Right ventricle myocardium inferior (tissue), 1 donor: ENCODE measurements at regions of chr7 and their contacts with region 1.

Region 1: DNA sequence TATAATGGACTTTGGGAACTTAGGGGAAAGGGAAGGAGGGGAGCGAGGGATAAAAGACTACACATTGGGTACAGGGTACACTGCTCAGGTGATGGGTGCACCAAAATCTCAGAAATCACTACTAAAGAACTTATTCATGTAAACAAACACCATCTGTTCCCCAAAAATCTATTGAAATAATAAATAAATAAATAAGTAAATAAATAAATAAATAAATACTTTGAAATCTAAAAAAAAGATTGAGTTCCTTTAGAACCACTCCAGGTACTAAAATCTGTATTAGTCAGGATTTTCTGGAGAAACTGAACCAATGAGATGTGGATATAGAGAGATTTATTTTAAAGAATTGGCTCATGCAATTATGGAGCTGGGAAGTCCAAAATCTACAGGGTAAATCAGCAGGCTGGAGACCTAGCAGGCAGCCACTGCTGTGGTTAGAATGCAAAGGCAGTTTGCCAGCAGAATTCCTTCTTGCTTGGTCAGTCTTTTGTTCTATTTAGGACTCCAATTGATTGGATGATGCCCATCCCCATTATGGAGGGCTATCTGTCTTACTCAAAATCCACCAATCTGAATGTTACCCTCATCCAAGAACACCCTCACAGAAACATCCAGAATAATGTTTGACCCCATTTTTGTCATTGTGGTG is 8.9 kb downstream of the IGFBP1 start:
- DNase-seq: no peak
- ATAC-seq: no peak

Region 2: GRCh38 chr7:47254081-47255006 is 1357.2 kb after region 1 on chr7:
- intact Hi-C with region 1: loop called (anchors 5 kb)
- DNase-seq: peak; percentile 94
- ATAC-seq: peak; percentile 95